Ascending aorta (tissue), 2 donors: ENCODE measurements at regions of chr12 and their contacts with region 1.

Region 1: GRCh38 chr12:88935856-88936255 is 355.6 kb upstream of the KITLG start:
- DNase-seq: no peak
- H3K4me3 ChIP-seq: no peak overlapping the region
- H3K27ac ChIP-seq: no peak overlapping the region
- H3K4me1 ChIP-seq: no peaks in the 10 kb centered on the region
- H3K27me3 ChIP-seq: no peaks in the 10 kb centered on the region
- CTCF ChIP-seq: no peak

Region 2: DNA sequence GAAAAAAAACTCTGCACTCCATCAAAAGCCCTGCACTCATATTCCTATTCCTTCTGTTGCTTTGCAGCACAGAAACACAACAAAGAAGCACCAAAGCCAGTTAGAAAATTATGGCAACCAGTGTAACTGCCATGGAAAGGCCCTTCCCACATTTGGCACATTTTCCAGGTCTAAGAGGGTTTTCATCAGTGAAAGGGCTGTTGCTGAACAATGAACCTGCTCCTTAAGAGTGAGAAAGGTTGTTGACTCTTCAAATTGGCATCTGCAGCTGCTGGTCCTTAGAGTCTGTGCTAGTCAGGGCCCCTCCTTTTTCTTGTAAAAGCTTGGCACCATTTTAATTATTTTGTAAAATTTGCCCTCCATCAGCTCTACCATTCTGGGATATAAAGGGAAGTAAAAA is 23.1 kb after region 1 on chr12:
- intact Hi-C with region 1: loop called (anchors 1 kb)
- DNase-seq: no peak
- H3K4me3 ChIP-seq: no peak overlapping the region
- H3K27ac ChIP-seq: no peak overlapping the region
- H3K4me1 ChIP-seq: no peaks in the 10 kb centered on the region
- H3K27me3 ChIP-seq: no peaks in the 10 kb centered on the region
- CTCF ChIP-seq: no peak